T-cell (primary cell): ENCODE measurements at regions of chr13 and their contacts with region 1.

Region 1: GRCh38 chr13:28147495-28147894 is 9.2 kb downstream of the PAN3 start:
- DNase-seq: no peak
- ATAC-seq: no peak
- H3K4me3 ChIP-seq: no peak overlapping the region
- H3K4me3 Mint-ChIP-seq: no peak overlapping the region
- H3K27ac ChIP-seq: no peak overlapping the region
- H3K27ac Mint-ChIP-seq: no peak overlapping the region
- H3K4me1 ChIP-seq: peaks cover 17 to 22% of the 10 kb centered on the region in 2 experiments
- H3K4me1 Mint-ChIP-seq: peaks cover 75 to 78% (median 78%) of the 10 kb centered on the region in 3 donors
- H3K27me3 ChIP-seq: no peaks in the 10 kb centered on the region
- H3K27me3 Mint-ChIP-seq: no peaks in the 10 kb centered on the region

Region 2: GRCh38 chr13:28166279-28166678 is 18.8 kb after region 1 on chr13:
- CTCF ChIA-PET with region 1: no interaction called
- POLR2A ChIA-PET with region 1: no interaction called
- DNase-seq: no peak
- ATAC-seq: no peak
- H3K4me3 ChIP-seq: no peak overlapping the region
- H3K4me3 Mint-ChIP-seq: peak overlapping the region in 1 of 3 donors; percentile 4
- H3K27ac ChIP-seq: no peak overlapping the region
- H3K27ac Mint-ChIP-seq: no peak overlapping the region
- H3K4me1 ChIP-seq: peaks cover 0 to 18% of the 10 kb centered on the region in 2 experiments
- H3K4me1 Mint-ChIP-seq: peaks cover 47 to 64% (median 61%) of the 10 kb centered on the region in 3 donors
- H3K27me3 ChIP-seq: no peaks in the 10 kb centered on the region
- H3K27me3 Mint-ChIP-seq: no peaks in the 10 kb centered on the region

Region 3: GRCh38 chr13:28204690-28205443 is 57.4 kb after region 1 on chr13:
- CTCF ChIA-PET with region 1: no interaction called
- POLR2A ChIA-PET with region 1: interaction called in 1 of 2 experiments, 10 read pairs
- DNase-seq: no peak
- ATAC-seq: no peak
- H3K4me3 ChIP-seq: no peak overlapping the region
- H3K4me3 Mint-ChIP-seq: no peak overlapping the region
- H3K27ac ChIP-seq: no peak overlapping the region
- H3K27ac Mint-ChIP-seq: peak overlapping the region; percentile 3 to 5
- H3K4me1 ChIP-seq: peaks cover 10 to 11% of the 10 kb centered on the region in 2 experiments
- H3K4me1 Mint-ChIP-seq: peaks cover 42 to 57% (median 48%) of the 10 kb centered on the region in 3 donors
- H3K27me3 ChIP-seq: no peaks in the 10 kb centered on the region
- H3K27me3 Mint-ChIP-seq: no peaks in the 10 kb centered on the region

Region 4: GRCh38 chr13:28239374-28239773 is 91.9 kb after region 1 on chr13:
- CTCF ChIA-PET with region 1: no interaction called
- POLR2A ChIA-PET with region 1: interaction called, 4 to 10 read pairs
- DNase-seq: no peak
- ATAC-seq: no peak
- H3K4me3 ChIP-seq: no peak overlapping the region
- H3K4me3 Mint-ChIP-seq: no peak overlapping the region
- H3K27ac ChIP-seq: no peak overlapping the region
- H3K27ac Mint-ChIP-seq: peak overlapping the region; percentile 8 to 10
- H3K4me1 ChIP-seq: no peaks in the 10 kb centered on the region
- H3K4me1 Mint-ChIP-seq: peaks cover 7 to 14% (median 7%) of the 10 kb centered on the region in 3 donors
- H3K27me3 ChIP-seq: no peaks in the 10 kb centered on the region
- H3K27me3 Mint-ChIP-seq: no peaks in the 10 kb centered on the region